ENCODE measurements at regions of chr16 and their contacts with region 1.

Region 1: GRCh38 chr16:4649744-4650442 is 25.3 kb downstream of the MGRN1 start:
- DNase-seq: peak in 1 of 2 experiments; percentile 41
- H3K4me3 ChIP-seq: no peak overlapping the region
- H3K27ac ChIP-seq: no peak overlapping the region
- H3K4me1 ChIP-seq: peaks cover 0 to 2% (median 0%) of the 10 kb centered on the region in 4 experiments; a peak in 2 of 7 replicates
- H3K27me3 ChIP-seq: no peaks in the 10 kb centered on the region
- CTCF ChIP-seq: no peak
- EP300 ChIP-seq: no peak
- POLR2A ChIP-seq: no peak
- RAD21 ChIP-seq: no peak

Region 2: DNA sequence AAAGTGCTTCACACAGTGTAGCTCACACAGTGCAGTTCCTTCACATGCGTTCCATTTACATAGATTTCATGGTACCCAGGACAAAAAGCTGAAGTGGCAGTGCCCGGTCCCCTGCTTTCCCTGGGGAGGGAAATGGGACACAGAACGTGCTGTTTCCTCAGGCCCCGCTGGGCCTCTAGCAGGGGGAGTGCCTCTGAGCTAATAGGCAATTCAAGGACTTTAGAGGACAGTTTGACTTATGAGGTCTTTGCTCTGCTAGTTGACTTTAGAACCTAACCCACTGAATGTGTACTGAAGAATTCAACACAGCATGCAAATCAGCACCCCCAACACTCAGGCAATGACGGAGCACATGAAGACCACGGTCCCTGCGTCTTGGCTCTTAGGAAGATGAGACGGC is 118.1 kb before region 1 on chr16:
- CTCF ChIA-PET with region 1: no interaction called
- POLR2A ChIA-PET with region 1: no interaction called
- DNase-seq: no peak
- H3K4me3 ChIP-seq: no peak overlapping the region
- H3K27ac ChIP-seq: no peak overlapping the region
- H3K4me1 ChIP-seq: peaks cover 4 to 20% (median 10%) of the 10 kb centered on the region in 4 experiments
- H3K27me3 ChIP-seq: no peaks in the 10 kb centered on the region
- CTCF ChIP-seq: no peak
- EP300 ChIP-seq: no peak
- POLR2A ChIP-seq: no peak
- RAD21 ChIP-seq: no peak

Region 3: GRCh38 chr16:4660454-4661007 is 10.6 kb after region 1 on chr16:
- CTCF ChIA-PET with region 1: interaction called, 18 read pairs
- POLR2A ChIA-PET with region 1: no interaction called
- DNase-seq: no peak
- H3K4me3 ChIP-seq: no peak overlapping the region
- H3K27ac ChIP-seq: no peak overlapping the region
- H3K4me1 ChIP-seq: peaks cover 0 to 2% (median 0%) of the 10 kb centered on the region in 4 experiments; a peak in 3 of 7 replicates
- H3K27me3 ChIP-seq: no peaks in the 10 kb centered on the region
- CTCF ChIP-seq: no peak
- EP300 ChIP-seq: no peak
- POLR2A ChIP-seq: no peak
- RAD21 ChIP-seq: no peak

Region 4: DNA sequence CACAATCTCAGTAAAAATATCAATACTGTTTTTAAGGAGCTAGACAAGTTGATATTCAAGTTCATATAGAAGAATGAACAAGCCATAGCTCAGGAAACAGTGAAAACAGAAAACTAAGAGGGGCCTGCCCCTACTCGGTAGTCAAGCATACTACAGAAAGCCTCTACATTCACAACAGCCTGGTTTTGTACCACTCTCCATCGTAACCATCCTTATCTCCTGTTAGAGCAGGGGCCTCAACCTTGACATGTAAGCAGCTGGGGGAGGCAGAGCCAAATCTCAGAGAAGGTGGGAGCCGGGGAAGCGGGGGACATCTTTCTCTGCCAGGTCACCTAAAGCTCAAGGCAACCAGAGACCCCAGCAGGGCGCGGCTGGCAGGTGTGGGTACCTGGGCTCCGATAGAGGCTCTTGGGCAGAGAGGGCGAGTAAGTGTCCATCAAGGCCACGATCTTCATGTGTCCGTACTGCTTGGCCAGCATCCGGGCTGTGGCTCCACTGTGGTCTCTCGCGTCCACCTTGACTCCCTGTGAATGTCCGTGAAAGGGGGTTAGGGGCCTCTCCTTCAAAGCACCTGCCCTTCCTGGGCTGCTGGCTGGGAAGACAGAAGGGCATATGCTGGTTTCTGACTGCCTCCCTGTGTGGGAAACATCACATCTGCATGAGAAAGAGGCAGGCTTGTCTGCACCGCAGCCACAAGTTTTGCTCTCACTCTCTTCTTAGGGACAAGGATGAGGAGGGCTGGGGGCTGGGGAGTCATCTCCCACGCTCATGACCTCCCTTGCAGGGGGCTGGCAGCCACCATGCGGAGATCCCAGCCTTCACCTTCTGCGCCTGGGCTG is 64.0 kb after region 1 on chr16:
- CTCF ChIA-PET with region 1: no interaction called
- POLR2A ChIA-PET with region 1: no interaction called
- DNase-seq: no peak
- H3K4me3 ChIP-seq: peak overlapping the region in 2 of 4 experiments; percentile 11 to 19; a peak in 3 of 8 replicates
- H3K27ac ChIP-seq: no peak overlapping the region
- H3K4me1 ChIP-seq: peaks cover under 1 to 16% (median 8%) of the 10 kb centered on the region in 4 experiments
- H3K27me3 ChIP-seq: no peaks in the 10 kb centered on the region
- CTCF ChIP-seq: no peak
- EP300 ChIP-seq: no peak
- POLR2A ChIP-seq: no peak
- RAD21 ChIP-seq: no peak

Region 5: GRCh38 chr16:4972938-4973587 is 323.2 kb after region 1 on chr16:
- CTCF ChIA-PET with region 1: no interaction called
- POLR2A ChIA-PET with region 1: no interaction called
- DNase-seq: no peak
- H3K4me3 ChIP-seq: no peak overlapping the region
- H3K27ac ChIP-seq: no peak overlapping the region
- H3K4me1 ChIP-seq: peaks cover 12 to 26% (median 19%) of the 10 kb centered on the region in 4 experiments
- H3K27me3 ChIP-seq: no peaks in the 10 kb centered on the region
- CTCF ChIP-seq: no peak
- EP300 ChIP-seq: no peak
- POLR2A ChIP-seq: no peak
- RAD21 ChIP-seq: no peak